ENCODE measurements at regions of chrX and their contacts with region 1.

Region 1: DNA sequence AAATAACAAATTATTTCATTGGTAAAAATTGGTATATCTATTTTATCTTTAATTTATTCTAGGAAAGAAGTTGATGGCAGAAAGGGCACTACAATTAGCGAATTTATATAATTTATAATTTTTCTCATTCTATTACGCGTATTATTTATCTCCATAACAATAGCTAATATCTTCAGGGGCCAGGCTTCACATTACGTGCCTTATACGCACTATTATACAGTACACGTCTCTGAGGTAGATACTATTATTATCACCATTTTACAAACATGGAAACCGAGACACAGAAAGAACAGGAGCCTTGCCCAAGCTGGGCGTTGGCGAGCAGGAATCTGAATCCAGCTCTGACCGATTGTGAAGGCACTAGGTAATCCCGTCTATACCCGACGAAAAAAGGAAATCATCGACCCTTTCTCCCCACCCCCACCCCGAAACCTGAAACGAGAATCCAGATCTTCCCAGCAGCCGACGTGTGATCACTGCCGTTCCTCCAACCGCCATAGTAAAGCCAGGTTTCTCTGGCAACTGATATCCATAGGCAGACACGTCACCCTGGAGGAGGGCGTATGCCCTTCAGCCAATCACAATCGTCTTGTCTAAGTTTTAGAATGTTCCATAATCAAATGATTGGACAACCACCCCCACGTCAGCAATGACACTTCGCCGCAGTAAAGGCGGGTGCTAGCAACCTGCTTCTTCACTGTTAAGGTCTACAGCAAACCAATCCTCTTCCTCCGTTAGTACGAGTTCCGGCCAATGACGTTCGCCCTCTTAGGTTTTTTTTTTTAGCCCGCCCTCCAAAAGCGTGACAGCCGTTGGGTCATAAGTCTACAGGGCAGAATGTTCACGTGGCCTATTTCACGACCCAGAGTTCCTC is at the start of gene MORF4L2:
- DNase-seq: peak; percentile 93 to 97
- H3K4me3 ChIP-seq: peak within 1 kb of the TSS; percentile 58 to 63
- H3K27ac ChIP-seq: peak within 1 kb of the TSS; percentile 89 to 91
- H3K4me1 ChIP-seq: no peaks in the 10 kb centered on the region
- H3K27me3 ChIP-seq: no peaks in the 10 kb centered on the region
- CTCF ChIP-seq: no peak
- total RNA-seq, gene MORF4L2: 211 TPM

Region 2: GRCh38 chrX:101931488-101932248 is 1754.8 kb before region 1 on chrX and contains the start of gene ZMAT1:
- intact Hi-C with region 1: loop called (anchors 5 kb)
- DNase-seq: peak; percentile 82 to 97
- H3K4me3 ChIP-seq: peak within 1 kb of the TSS; percentile 56 to 87
- H3K27ac ChIP-seq: peak within 1 kb of the TSS; percentile 96 to 99
- H3K4me1 ChIP-seq: no peaks in the 10 kb centered on the region
- H3K27me3 ChIP-seq: no peaks in the 10 kb centered on the region
- CTCF ChIP-seq: no peak
- total RNA-seq, gene ZMAT1: 0.96 TPM

Region 3: GRCh38 chrX:103533511-103534216 is 152.8 kb before region 1 on chrX:
- intact Hi-C with region 1: loop called (anchors 2 kb)
- DNase-seq: peak; percentile 16 to 90
- H3K4me3 ChIP-seq: peak overlapping the region; percentile 45 to 56
- H3K27ac ChIP-seq: peak overlapping the region; percentile 52 to 63
- H3K4me1 ChIP-seq: peaks cover 0 to 10% of the 10 kb centered on the region in 2 donors
- H3K27me3 ChIP-seq: no peaks in the 10 kb centered on the region
- CTCF ChIP-seq: peak; percentile 60 to 88 (median 81)

Region 4: GRCh38 chrX:103607364-103608305 is 78.8 kb before region 1 on chrX and contains the start of gene TCEAL3:
- intact Hi-C with region 1: loop called (anchors 5 kb)
- DNase-seq: peak in 1 of 2 donors; percentile 79
- H3K4me3 ChIP-seq: peak within 1 kb of the TSS; percentile 75 to 85
- H3K27ac ChIP-seq: peak within 1 kb of the TSS; percentile 93 to 94
- H3K4me1 ChIP-seq: no peaks in the 10 kb centered on the region
- H3K27me3 ChIP-seq: no peaks in the 10 kb centered on the region
- CTCF ChIP-seq: no peak
- total RNA-seq, gene TCEAL3: 11.3 TPM

Region 5: DNA sequence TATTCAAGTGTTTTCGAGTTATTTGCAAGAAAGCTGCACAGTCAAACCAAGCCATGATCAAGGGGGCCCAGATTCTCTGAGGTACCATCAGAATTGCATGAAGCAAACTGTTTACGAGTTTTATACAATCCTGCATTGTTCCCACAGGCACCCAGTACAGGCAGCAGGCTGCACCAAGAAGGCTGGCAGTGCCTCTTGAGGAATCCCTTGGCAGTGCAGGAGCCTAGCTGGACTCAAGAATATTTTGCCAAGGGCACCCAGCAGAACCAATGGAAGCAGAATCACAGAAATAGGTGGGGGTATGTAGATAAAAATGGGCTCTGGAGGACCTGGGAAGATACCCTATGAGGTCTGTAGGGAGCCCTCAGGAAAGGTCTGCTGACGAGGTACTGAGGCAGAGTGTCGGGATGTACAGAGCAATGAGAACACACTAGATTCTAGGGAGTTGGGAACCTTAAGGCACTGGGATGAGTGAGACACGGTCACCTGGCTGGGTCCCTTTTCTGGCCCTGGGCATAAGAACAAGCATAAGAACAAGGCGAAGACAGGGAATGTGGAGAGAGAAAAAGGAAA is 87.7 kb after region 1 on chrX:
- intact Hi-C with region 1: loop called (anchors 2 kb)
- DNase-seq: no peak
- H3K4me3 ChIP-seq: no peak overlapping the region
- H3K27ac ChIP-seq: no peak overlapping the region
- H3K4me1 ChIP-seq: no peaks in the 10 kb centered on the region
- H3K27me3 ChIP-seq: no peaks in the 10 kb centered on the region
- CTCF ChIP-seq: peak in 2 of 3 experiments; percentile 20 to 47

Region 6: GRCh38 chrX:103831803-103832544 is 145.5 kb after region 1 on chrX and contains the start of gene RAB9B:
- intact Hi-C with region 1: loop called (anchors 5 kb)
- DNase-seq: peak in 1 of 2 donors; percentile 81
- H3K4me3 ChIP-seq: peak within 1 kb of the TSS; percentile 59 to 80
- H3K27ac ChIP-seq: peak within 1 kb of the TSS; percentile 69 to 87
- H3K4me1 ChIP-seq: no peaks in the 10 kb centered on the region
- H3K27me3 ChIP-seq: peaks cover 8% of the 10 kb centered on the region
- CTCF ChIP-seq: no peak
- total RNA-seq, gene RAB9B: 0.43 TPM

Measured in ascending aorta (tissue), 2 donors.